Left ventricle myocardium inferior (tissue), 1 donor: ENCODE measurements at regions of chr16 and their contacts with region 1.

Region 1: GRCh38 chr16:30526823-30527635 is 663 bp upstream of the ZNF768 start:
- DNase-seq: peak; percentile 99
- H3K4me3 ChIP-seq: peak overlapping the region; percentile 76
- H3K27ac ChIP-seq: peak overlapping the region; percentile 98
- H3K4me1 ChIP-seq: peaks cover 43% of the 10 kb centered on the region
- H3K27me3 ChIP-seq: no peaks in the 10 kb centered on the region
- CTCF ChIP-seq: peak; percentile 56

Region 2: DNA sequence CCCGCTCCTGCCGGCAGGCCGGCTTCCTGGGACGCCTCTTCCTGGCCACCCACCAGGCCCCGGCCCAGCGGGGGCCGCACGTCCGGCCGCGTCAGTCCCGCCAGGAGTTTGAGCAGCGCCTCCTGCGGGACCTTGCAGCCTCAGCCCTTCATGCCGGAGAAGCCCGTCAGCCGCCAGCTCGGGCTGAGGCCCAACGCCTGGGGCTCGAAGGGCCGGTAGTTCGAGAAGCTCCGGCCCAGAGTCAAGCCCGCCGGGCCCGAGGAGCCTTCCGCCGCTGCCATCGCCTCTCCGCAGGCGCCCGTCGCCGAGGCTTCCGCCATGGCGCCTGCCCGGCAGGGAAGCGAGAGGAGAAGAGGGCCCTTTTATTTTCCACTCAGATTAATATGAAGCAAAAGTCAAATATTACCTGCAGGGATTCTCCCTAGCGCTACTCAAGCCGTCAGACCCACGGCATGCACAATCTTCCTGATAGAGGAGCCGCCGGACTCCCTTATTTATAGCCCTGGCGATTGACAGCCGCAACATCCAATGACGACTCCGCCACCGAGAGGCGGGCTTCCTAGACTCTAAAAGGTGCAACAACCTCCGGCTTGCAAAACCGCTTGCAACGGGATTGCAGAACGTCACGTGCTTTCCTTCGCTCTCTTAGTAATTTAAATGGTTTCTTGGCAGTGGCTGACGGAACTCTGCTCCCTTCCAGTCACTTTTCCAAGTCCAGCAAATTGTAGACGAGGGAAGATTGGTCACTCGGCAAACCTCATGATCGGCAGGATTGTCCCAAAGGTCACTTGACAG is 81.4 kb before region 1 on chr16 and contains the start of gene SEPHS2:
- intact Hi-C with region 1: loop called (anchors 10 kb)
- DNase-seq: peak; percentile 99
- H3K4me3 ChIP-seq: peak within 1 kb of the TSS; percentile 92
- H3K27ac ChIP-seq: peak within 1 kb of the TSS; percentile 98
- H3K4me1 ChIP-seq: peaks cover 32% of the 10 kb centered on the region
- H3K27me3 ChIP-seq: peaks cover under 1% of the 10 kb centered on the region
- CTCF ChIP-seq: peak; percentile 54
- total RNA-seq, gene SEPHS2: 29.8 TPM